Activated CD4-positive, alpha-beta memory T cell treated with anti-CD3 and anti-CD28 coated beads, Interleukin-2, amount 10 ng/mL, durations not matched to agents 7 days and 5 days (primary cell): ENCODE measurements at regions of chr19 and their contacts with region 1.

Region 1: DNA sequence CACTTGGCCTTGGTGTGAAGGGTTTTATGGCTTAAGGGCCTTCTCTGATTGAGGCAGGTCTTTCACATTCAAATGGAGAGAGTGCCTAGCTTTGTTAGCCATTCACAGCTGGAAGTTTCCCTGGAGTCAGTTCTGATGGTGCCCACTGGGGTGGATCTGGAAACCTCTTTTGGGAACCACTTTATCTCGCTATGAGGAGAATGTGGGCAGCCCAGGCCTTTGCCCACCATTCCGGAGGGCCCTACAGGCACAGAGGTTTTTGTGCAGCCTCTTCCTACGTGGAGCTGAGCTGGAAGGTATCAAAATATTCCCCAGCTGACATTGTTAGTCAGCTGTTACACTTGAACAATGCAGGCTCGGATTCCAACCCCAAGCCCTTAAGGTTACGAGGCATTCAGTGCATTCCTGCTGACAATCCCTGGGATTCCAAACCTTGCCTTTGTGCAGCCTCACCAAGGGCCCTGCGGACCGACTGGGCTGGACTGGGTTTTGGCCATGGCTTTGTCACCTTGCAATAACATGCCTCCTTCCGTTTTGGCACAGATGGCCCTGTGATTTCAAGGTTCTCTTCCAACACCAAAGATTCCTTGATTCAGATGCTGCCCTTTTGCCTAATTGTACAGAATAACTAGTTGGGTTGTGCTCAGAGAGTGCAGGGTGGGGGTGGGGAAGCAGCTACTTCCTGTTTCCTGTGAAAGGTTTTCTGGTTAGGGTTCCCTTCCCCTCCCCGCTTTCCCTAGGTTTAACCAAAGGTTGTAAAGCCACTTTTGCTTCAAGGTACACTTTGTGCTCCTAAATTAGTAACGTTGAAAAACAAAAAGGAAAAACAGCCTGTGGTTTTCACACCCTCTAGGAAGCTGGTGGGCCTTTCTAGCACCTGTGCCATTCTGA is 27.0 kb downstream of the SAE1 start:
- DNase-seq: peak; percentile 49
- H3K4me3 Mint-ChIP-seq: peak overlapping the region; percentile 0
- H3K27ac Mint-ChIP-seq: peak overlapping the region; percentile 85
- H3K4me1 Mint-ChIP-seq: peaks cover 51% of the 10 kb centered on the region
- H3K27me3 Mint-ChIP-seq: no peaks in the 10 kb centered on the region

Region 2: DNA sequence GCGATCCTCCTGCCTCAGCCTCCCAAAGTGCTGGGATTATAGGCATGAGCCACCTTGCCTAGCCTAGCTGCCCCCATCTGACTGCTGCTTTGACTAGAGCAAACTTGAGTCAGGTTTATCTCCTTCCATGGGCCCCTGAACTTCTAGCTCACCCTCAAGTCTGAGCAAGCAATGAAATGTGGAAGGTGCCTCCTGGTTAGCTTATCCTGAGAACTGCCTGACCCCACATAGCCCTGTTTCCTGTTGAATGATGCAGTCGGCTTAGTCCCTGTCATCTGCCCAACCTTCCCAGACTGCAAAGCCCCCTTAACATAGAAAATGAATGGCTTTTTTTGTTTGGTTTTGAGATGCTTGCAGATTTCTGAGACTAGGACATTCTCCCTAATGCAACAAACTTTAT is 100.3 kb before region 1 on chr19:
- CTCF ChIA-PET with region 1: no interaction called
- POLR2A ChIA-PET with region 1: no interaction called
- DNase-seq: no peak
- H3K4me3 Mint-ChIP-seq: no peak overlapping the region
- H3K27ac Mint-ChIP-seq: no peak overlapping the region
- H3K4me1 Mint-ChIP-seq: no peaks in the 10 kb centered on the region
- H3K27me3 Mint-ChIP-seq: peaks cover 12% of the 10 kb centered on the region

Region 3: GRCh38 chr19:47093254-47093653 is 64.4 kb before region 1 on chr19:
- CTCF ChIA-PET with region 1: no interaction called
- POLR2A ChIA-PET with region 1: no interaction called
- DNase-seq: peak; percentile 50
- H3K4me3 Mint-ChIP-seq: peak overlapping the region; percentile 79
- H3K27ac Mint-ChIP-seq: peak overlapping the region; percentile 91
- H3K4me1 Mint-ChIP-seq: peaks cover 81% of the 10 kb centered on the region
- H3K27me3 Mint-ChIP-seq: no peaks in the 10 kb centered on the region

Region 4: DNA sequence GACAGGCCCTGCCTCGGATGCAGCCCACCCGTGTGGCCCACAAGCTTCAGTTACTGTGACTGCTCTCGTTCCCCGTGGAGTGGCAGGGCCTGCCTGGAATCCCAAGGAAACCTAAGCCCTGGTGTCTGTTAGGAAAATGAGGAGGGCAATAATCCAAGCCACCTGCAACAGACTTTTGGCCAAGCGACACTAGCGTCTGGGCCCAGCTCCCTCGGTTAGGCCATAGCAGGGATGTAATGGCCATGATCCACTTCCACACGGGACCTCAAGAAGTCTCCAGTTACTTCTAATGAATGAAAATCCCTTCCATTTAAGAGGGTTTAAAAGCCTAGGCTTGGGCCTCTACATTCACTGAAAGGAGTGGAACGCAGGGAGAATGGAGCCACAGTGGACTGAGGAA is 53.0 kb before region 1 on chr19:
- CTCF ChIA-PET with region 1: no interaction called
- POLR2A ChIA-PET with region 1: no interaction called
- DNase-seq: no peak
- H3K4me3 Mint-ChIP-seq: no peak overlapping the region
- H3K27ac Mint-ChIP-seq: no peak overlapping the region
- H3K4me1 Mint-ChIP-seq: peaks cover 70% of the 10 kb centered on the region
- H3K27me3 Mint-ChIP-seq: no peaks in the 10 kb centered on the region

Region 5: GRCh38 chr19:47143322-47144073 is 14.2 kb before region 1 on chr19:
- CTCF ChIA-PET with region 1: interaction called, 19 read pairs
- POLR2A ChIA-PET with region 1: interaction called, 22 read pairs
- DNase-seq: no peak
- H3K4me3 Mint-ChIP-seq: no peak overlapping the region
- H3K27ac Mint-ChIP-seq: peak overlapping the region; percentile 21
- H3K4me1 Mint-ChIP-seq: peaks cover 55% of the 10 kb centered on the region
- H3K27me3 Mint-ChIP-seq: no peaks in the 10 kb centered on the region

Region 6: DNA sequence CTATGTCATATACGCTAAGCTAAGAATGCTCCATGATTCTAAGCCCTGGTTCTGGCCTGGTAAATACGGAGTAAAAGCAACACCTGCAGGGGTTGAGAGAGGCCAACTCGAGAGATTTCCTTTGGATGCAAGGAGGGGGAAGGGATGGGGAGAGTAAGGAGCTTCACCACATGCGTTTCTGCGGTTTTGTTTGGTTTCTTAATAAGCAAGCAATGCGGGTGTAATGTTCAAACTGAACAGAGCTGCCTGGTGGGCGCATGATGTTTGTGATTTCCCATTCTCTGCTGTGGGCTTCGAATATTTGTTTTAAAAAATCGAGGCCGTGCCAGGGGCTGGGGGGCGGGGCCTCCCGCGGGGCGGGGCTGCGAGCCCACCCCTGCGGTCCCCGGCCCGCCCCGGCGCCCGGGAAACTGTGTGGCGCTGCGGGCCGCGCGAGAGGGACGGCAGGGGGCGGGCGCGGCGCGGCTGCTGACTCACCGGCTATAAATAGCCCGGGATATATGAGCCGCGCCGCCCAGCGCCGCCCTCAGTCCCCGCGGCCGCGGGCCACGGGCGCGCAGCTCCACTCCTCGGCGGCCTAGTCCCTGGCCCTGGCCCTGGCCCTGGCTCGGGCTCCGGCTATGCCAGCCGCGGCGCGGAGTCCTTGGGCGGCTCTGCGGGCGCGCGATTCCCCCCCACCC is 68.2 kb after region 1 on chr19:
- CTCF ChIA-PET with region 1: no interaction called
- POLR2A ChIA-PET with region 1: interaction called, 13 read pairs
- DNase-seq: peak; percentile 88
- H3K4me3 Mint-ChIP-seq: peak overlapping the region; percentile 79
- H3K27ac Mint-ChIP-seq: peak overlapping the region; percentile 89
- H3K4me1 Mint-ChIP-seq: peaks cover 18% of the 10 kb centered on the region
- H3K27me3 Mint-ChIP-seq: no peaks in the 10 kb centered on the region